ENCODE measurements at regions of chr1 and their contacts with region 1.

Region 1: GRCh38 chr1:20633190-20634064 is at the start of gene PINK1:
- DNase-seq: peak; percentile 90
- H3K4me3 ChIP-seq: peak within 1 kb of the TSS; percentile 88 to 99 (median 92)
- H3K27ac ChIP-seq: peak within 1 kb of the TSS; percentile 95 to 96 (median 96)
- H3K4me1 ChIP-seq: peaks cover 0 to 28% (median 20%) of the 10 kb centered on the region in 4 donors
- H3K27me3 ChIP-seq: no peaks in the 10 kb centered on the region
- CTCF ChIP-seq: peak; percentile 88 to 98 (median 92)
- EP300 ChIP-seq: no peak
- POLR2A ChIP-seq: no peak
- total RNA-seq, gene PINK1: 137 to 179 (median 161) TPM

Region 2: DNA sequence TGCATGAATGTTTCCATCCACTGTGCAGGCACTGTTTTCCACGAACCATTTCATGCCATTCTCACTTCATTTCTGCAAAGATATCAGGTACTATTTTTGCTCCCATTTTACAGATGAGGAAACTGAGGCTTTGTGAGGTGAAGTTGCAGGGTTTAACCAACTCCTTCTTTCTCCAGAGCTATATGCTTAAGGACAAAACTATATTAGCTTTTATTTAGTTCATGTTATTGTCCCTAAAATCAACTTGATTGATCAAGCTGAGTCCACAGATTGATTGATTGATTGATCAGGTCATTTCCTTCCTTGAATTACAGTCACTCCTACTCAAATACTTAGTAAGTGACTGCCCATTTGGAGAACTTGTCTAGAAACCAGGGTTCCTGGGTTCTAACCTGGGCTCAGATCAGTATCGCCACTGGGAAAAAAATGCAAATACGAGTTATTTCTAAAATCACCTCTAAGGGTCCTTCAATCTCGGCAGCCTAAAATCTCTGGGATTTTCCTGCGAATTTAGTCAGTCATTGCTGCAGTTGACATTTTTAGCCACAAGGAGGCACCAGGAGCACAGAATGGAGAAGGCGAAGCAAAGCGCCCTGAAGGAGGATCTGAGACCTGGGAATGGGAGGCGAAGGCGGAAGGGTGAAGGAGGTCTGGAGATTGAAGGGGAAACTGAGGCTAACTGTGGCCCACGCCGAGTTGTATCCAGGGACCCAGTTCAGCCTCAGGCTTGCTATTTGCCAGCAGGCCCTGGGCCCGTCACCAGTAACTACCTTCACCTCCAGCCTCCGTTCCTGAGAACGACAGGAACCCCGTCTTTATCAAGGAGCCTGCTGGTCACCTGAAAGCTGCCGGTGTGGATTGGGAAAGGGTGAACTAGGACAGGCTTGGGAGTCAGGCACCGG is 111.2 kb before region 1 on chr1:
- intact Hi-C with region 1: loop called (anchors 2 kb)
- DNase-seq: peak; percentile 85
- H3K4me3 ChIP-seq: peak overlapping the region in 1 of 4 donors; percentile 6
- H3K27ac ChIP-seq: no peak overlapping the region
- H3K4me1 ChIP-seq: peaks cover 0 to 7% (median 0%) of the 10 kb centered on the region in 4 donors
- H3K27me3 ChIP-seq: no peaks in the 10 kb centered on the region
- CTCF ChIP-seq: peak; percentile 87 to 93 (median 90)
- EP300 ChIP-seq: no peak
- POLR2A ChIP-seq: no peak

Region 3: GRCh38 chr1:20685099-20685662 is 51.8 kb after region 1 on chr1:
- intact Hi-C with region 1: no loop called
- DNase-seq: no peak
- H3K4me3 ChIP-seq: peak overlapping the region in 2 of 4 donors; percentile 4 to 8
- H3K27ac ChIP-seq: peak overlapping the region; percentile 19 to 64 (median 38)
- H3K4me1 ChIP-seq: no peaks in the 10 kb centered on the region
- H3K27me3 ChIP-seq: no peaks in the 10 kb centered on the region
- CTCF ChIP-seq: no peak
- EP300 ChIP-seq: no peak
- POLR2A ChIP-seq: no peak